Esophagus muscularis mucosa (tissue), 4 donors: ENCODE measurements at regions of chr6 and their contacts with region 1.

Region 1: GRCh38 chr6:111423960-111424846 is 58.8 kb downstream of the REV3L start:
- DNase-seq: no peak
- H3K4me3 ChIP-seq: no peak overlapping the region
- H3K27ac ChIP-seq: no peak overlapping the region
- H3K4me1 ChIP-seq: peaks cover 11 to 58% (median 51%) of the 10 kb centered on the region in 4 donors
- H3K27me3 ChIP-seq: no peaks in the 10 kb centered on the region
- CTCF ChIP-seq: no peak
- EP300 ChIP-seq: no peak
- POLR2A ChIP-seq: no peak

Region 2: DNA sequence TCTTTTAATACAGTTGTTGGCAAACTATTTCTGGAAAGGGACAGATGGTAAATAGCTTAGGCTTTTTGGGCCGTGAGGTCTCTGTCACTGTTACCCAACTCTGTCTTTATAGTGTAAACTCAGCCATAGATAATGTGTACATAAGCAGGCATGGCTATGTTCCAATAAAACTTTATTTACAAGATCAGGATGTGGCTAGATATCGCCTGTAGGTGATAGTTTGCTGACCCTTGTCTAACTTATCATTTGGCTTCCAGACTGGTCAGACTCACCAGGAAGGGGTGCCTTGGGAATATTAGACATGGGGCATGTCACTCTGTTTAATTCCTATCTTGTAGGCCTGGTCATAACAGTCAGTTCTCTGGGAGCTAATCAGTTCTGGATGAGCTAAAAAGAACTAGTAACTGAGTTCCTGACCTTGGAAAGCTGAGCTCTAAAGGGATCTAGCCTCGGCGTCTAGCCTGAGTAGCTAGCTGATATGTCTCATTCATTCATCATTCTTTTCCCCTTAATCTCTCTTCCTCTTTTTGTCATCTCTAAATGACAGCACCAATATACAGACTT is 173.3 kb before region 1 on chr6:
- intact Hi-C with region 1: no loop called
- DNase-seq: no peak
- H3K4me3 ChIP-seq: no peak overlapping the region
- H3K27ac ChIP-seq: no peak overlapping the region
- H3K4me1 ChIP-seq: no peaks in the 10 kb centered on the region
- H3K27me3 ChIP-seq: peaks cover 0 to 17% (median 0%) of the 10 kb centered on the region in 4 donors
- CTCF ChIP-seq: no peak
- EP300 ChIP-seq: no peak
- POLR2A ChIP-seq: no peak

Region 3: GRCh38 chr6:111382476-111383300 is 41.5 kb before region 1 on chr6:
- intact Hi-C with region 1: no loop called
- DNase-seq: no peak
- H3K4me3 ChIP-seq: no peak overlapping the region
- H3K27ac ChIP-seq: peak overlapping the region in 3 of 4 donors; percentile 3 to 37 (median 22)
- H3K4me1 ChIP-seq: peaks cover 4 to 11% (median 9%) of the 10 kb centered on the region in 4 donors
- H3K27me3 ChIP-seq: no peaks in the 10 kb centered on the region
- CTCF ChIP-seq: no peak
- EP300 ChIP-seq: no peak
- POLR2A ChIP-seq: no peak

Region 4: GRCh38 chr6:111456208-111456607 is 32.0 kb after region 1 on chr6:
- intact Hi-C with region 1: loop called (anchors 5 kb)
- DNase-seq: no peak
- H3K4me3 ChIP-seq: no peak overlapping the region
- H3K27ac ChIP-seq: no peak overlapping the region
- H3K4me1 ChIP-seq: peaks cover 10 to 29% (median 25%) of the 10 kb centered on the region in 4 donors
- H3K27me3 ChIP-seq: no peaks in the 10 kb centered on the region
- CTCF ChIP-seq: no peak
- EP300 ChIP-seq: no peak
- POLR2A ChIP-seq: no peak